Heart right ventricle (tissue), 16 donors: ENCODE measurements at regions of chr1 and their contacts with region 1.

Region 1: DNA sequence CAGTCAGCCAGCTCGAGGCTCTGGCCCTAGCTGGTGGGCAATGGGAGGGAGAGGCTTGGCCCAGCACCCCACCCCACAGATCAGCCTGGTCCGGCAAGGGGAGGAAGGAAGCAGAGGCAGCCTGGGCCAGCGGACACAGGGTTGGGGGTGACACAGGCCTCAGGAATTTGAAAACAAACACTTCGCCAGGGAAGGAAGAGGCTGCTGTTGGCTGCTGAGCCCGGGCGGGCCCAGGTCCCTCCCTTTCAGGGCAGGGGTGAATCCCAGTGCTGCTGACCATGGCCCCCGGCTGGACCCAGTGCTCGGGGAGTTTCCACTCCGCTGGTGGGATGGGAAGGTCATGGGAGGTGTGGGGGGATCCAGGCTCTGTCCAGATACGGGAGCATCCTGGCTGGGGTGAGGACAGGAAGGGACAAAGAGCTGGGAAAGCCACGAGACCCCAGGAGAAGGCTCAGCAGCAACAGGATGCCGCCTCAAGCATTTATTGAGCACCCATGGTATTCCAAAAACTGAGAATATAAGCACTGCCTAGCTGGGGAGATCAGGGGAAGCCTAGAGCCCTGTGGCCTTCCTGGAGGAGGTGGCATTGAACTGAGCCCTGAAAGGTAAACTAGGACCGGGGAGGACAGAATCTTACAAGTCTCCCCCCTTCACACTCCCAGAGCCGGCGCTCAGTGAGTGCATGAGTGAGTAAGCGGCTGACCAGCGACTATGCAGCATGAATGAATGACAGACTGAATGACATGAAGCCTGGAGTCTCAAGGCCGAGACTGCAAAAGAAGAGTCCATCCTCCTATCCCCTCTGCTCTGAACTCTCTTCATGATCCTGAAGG is 26.2 kb upstream of the EPHA2 start:
- DNase-seq: peak; percentile 85 to 88
- ATAC-seq: peak; percentile 91 to 97 (median 96)
- H3K4me3 ChIP-seq: peak overlapping the region in 1 of 10 donors; percentile 5
- H3K27ac ChIP-seq: peak overlapping the region; percentile 75 to 97 (median 92)
- H3K4me1 ChIP-seq: peaks cover 12 to 36% (median 25%) of the 10 kb centered on the region in 9 donors
- H3K27me3 ChIP-seq: no peaks in the 10 kb centered on the region
- CTCF ChIP-seq: no peak

Region 2: DNA sequence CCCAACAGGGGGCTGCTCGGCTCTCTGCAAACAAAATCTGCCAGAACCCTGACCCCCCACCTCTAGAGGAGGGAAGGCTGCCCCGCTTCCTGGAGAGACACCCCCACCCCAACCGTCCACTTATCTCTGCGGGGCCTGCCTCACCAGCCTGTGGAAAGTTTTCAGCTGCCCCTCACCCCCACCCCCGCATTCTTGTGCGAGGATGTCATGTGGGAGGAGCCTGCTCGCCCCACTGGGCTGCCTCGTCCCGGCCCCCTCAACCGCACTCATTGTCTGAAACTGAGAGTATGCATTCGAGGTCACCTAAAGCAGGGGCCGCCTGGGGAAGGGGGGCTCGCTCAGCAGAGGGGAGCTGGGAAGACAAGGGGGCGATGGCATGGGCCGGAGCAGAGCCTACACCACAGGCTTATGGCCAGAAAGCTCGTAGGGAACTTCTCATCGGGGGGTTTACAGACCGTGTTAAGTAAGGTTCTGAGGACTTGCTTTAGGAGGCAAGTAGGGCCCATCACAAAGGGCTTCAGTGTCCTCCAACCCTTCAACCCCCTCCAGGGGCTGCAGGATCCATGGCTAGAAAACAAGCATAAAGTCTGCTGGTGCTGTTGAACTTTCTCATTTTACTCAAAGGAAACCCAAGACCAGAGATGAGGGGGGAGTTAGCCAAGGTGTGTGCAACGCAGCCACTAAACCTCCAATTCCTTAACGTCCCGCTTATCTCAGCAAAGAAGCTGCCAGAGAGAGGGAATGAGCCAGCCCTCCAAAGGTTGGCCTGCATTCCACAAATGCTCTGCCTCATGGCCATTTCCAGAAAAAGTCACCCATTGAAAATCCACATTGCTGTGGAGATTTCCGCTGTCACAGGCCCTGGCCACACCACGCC is 35.6 kb before region 1 on chr1:
- intact Hi-C with region 1: loop called in 6 of 10 experiments (anchors 2 to 5 kb)
- DNase-seq: peak; percentile 78 to 90
- ATAC-seq: peak; percentile 48 to 78 (median 70)
- H3K4me3 ChIP-seq: peak overlapping the region in 8 of 10 donors; percentile 18 to 49 (median 38)
- H3K27ac ChIP-seq: peak overlapping the region; percentile 72 to 99 (median 96)
- H3K4me1 ChIP-seq: peaks cover 56 to 90% (median 81%) of the 10 kb centered on the region in 9 donors
- H3K27me3 ChIP-seq: no peaks in the 10 kb centered on the region
- CTCF ChIP-seq: peak in 1 of 9 donors; percentile 16

Region 3: DNA sequence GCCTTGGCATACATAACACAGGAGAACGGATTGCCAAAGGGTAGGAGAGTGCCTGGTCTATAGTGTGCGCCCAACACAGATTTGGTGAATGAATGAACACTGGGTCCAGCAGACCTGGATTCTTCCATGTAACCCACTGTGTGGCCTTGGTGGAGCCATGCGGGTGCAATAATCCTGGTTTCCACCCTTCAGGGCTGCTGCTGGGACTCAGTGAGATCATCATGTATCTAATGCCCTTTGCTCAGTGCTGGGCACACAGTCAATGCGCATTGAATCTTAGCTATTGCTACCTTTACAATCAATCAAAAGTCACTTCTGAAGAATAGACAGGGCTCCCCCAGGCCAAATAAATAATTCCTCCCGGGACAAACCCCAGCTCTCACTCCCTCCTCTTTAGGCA is 20.4 kb before region 1 on chr1:
- intact Hi-C with region 1: no loop called
- DNase-seq: no peak
- ATAC-seq: no peak
- H3K4me3 ChIP-seq: no peak overlapping the region
- H3K27ac ChIP-seq: no peak overlapping the region
- H3K4me1 ChIP-seq: peaks cover 0 to 27% (median 11%) of the 10 kb centered on the region in 9 donors
- H3K27me3 ChIP-seq: peaks cover 0 to 14% (median 0%) of the 10 kb centered on the region in 7 donors
- CTCF ChIP-seq: no peak